ENCODE measurements at regions of chr4 and their contacts with region 1.

Region 1: DNA sequence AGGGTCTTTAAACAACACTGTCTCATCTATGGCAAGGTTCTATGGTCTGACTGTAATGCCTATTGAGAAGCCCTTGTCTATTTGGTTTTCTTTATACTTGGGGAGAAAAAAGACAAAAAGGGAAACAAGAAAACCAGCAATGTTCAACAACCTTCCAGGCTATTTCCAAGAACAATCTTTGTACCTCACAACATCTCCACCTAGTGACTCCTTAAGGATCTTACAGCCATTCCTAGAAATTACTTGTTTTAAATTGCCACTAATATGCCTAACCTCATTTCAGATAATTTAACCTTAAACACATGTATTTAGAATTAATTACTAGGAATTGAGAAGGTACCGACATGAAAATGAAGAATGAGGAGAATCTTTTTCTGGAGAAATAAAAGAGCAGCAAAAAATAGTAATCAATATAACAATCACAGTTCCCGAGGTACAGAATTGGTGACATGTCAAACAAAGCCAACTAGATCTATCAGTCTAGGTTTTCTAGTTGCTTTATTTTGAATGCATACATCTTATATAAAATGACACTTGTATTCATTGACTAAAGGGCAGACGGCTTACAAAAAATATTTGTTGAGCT is 1.6 kb upstream of the RBM46 start:
- DNase-seq: no peak
- ATAC-seq: no peak
- H3K4me3 Mint-ChIP-seq: no peak overlapping the region
- H3K27ac Mint-ChIP-seq: no peak overlapping the region
- H3K4me1 Mint-ChIP-seq: no peaks in the 10 kb centered on the region
- H3K27me3 Mint-ChIP-seq: peaks cover 17% of the 10 kb centered on the region

Region 2: DNA sequence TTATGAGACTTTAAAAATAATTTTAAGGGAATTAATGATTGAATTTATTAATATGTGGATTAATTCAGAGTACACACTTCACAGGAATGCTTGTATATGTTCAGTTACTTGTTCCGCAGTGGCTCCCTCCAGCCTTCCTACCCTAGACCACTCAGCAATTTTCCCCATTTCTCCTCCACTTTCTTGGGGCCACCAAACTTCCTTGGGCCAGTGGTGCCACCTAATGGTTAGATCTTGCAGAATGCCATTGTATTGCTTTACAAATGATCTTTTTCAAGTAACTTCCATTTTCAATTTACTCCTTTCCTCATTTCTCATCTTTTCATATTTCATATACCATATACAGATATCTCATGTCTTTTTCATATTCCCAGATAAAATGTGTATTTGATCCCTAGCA is 1016.1 kb before region 1 on chr4:
- CTCF ChIA-PET with region 1: no interaction called
- POLR2A ChIA-PET with region 1: no interaction called
- intact Hi-C with region 1: no loop called
- DNase-seq: peak; percentile 40
- ATAC-seq: no peak
- H3K4me3 Mint-ChIP-seq: no peak overlapping the region
- H3K27ac Mint-ChIP-seq: no peak overlapping the region
- H3K4me1 Mint-ChIP-seq: peaks cover 5% of the 10 kb centered on the region
- H3K27me3 Mint-ChIP-seq: peaks cover 27% of the 10 kb centered on the region

Region 3: GRCh38 chr4:154642373-154643009 is 137.0 kb before region 1 on chr4:
- CTCF ChIA-PET with region 1: interaction called, 3 read pairs
- POLR2A ChIA-PET with region 1: no interaction called
- intact Hi-C with region 1: loop called in 1 of 2 experiments (anchors 5 kb)
- DNase-seq: no peak
- ATAC-seq: no peak
- H3K4me3 Mint-ChIP-seq: no peak overlapping the region
- H3K27ac Mint-ChIP-seq: no peak overlapping the region
- H3K4me1 Mint-ChIP-seq: no peaks in the 10 kb centered on the region
- H3K27me3 Mint-ChIP-seq: peaks cover 15% of the 10 kb centered on the region

Region 4: DNA sequence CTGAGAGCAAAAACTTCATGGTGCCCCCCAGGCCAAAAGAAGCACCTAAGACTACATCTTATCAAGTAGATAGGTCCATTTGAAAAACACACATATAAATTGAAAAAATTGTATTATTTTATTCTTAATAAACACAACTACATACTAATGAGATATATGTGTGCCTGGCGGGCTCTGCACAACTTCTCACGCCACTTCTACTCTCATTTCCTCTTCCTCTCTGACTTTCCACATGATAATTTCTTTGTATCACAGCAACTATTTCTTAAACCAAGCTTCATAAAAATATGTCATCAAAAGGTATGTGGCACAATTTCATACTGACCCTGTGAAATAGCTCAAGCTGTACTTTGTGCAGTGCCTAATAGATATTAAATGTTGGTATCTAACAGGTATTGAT is 418.3 kb after region 1 on chr4:
- CTCF ChIA-PET with region 1: no interaction called
- POLR2A ChIA-PET with region 1: no interaction called
- intact Hi-C with region 1: no loop called
- DNase-seq: no peak
- ATAC-seq: no peak
- H3K4me3 Mint-ChIP-seq: no peak overlapping the region
- H3K27ac Mint-ChIP-seq: no peak overlapping the region
- H3K4me1 Mint-ChIP-seq: no peaks in the 10 kb centered on the region
- H3K27me3 Mint-ChIP-seq: peaks cover 9% of the 10 kb centered on the region

Measured in activated CD4-positive, alpha-beta T cell treated with anti-CD3 and anti-CD28 coated beads for 36 hours (primary cell).